ENCODE measurements at regions of chr11 and their contacts with region 1.

Region 1: GRCh38 chr11:74255741-74256369 is 55.6 kb downstream of the P4HA3 start:
- DNase-seq: peak; percentile 63
- ATAC-seq: peak; percentile 50; the same call in 1 of the 2 replicates
- H3K4me3 ChIP-seq: no peak overlapping the region
- H3K27ac ChIP-seq: no peak overlapping the region
- H3K4me1 ChIP-seq: peaks cover 10% of the 10 kb centered on the region
- H3K27me3 ChIP-seq: no peaks in the 10 kb centered on the region
- CTCF ChIP-seq: peak; percentile 93
- POLR2A ChIP-seq: peak; percentile 60
- RAD21 ChIP-seq: peak; percentile 96

Region 2: DNA sequence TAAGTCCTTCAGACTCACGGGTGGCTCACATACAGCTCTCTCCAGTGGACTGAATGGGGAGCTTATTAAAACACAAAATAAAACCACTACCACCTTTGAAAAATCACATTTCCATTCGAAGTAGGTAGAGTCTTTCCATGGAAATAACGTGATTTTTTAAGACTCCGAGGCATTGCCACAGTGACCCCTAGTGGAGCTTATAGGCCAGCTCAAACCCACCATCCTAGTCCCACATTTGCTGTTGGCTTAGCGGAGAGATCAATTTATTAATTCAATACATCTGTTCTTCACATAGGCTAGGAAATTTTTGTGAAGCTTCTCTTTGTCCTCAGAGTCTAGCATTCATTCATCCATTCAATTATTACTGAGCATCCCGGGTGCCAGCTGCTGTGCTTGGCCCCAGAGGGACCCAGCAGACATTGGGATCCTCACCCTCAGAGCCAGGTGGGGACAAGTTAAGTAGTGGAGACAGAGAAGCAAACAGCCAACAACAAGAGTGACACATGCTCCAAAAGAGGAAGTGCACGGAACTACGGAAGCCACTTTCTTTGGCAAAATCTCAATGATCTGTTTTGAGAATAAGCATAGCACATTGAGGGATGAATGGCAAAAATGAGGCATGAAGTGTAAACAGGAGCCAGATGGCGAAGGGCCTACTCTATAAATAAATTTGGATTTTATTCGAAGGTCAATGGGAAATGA is 65.8 kb after region 1 on chr11:
- CTCF ChIA-PET with region 1: no interaction called
- POLR2A ChIA-PET with region 1: no interaction called
- dilution Hi-C with region 1: no loop called
- in situ Hi-C with region 1: loop called (anchors 10 kb)
- intact Hi-C with region 1: loop called (anchors 1 kb)
- DNase-seq: peak; percentile 65
- ATAC-seq: no peak
- H3K4me3 ChIP-seq: no peak overlapping the region
- H3K27ac ChIP-seq: no peak overlapping the region
- H3K4me1 ChIP-seq: peaks cover 22% of the 10 kb centered on the region
- H3K27me3 ChIP-seq: no peaks in the 10 kb centered on the region
- CTCF ChIP-seq: peak; percentile 55
- POLR2A ChIP-seq: no peak
- RAD21 ChIP-seq: peak; percentile 60

Region 3: DNA sequence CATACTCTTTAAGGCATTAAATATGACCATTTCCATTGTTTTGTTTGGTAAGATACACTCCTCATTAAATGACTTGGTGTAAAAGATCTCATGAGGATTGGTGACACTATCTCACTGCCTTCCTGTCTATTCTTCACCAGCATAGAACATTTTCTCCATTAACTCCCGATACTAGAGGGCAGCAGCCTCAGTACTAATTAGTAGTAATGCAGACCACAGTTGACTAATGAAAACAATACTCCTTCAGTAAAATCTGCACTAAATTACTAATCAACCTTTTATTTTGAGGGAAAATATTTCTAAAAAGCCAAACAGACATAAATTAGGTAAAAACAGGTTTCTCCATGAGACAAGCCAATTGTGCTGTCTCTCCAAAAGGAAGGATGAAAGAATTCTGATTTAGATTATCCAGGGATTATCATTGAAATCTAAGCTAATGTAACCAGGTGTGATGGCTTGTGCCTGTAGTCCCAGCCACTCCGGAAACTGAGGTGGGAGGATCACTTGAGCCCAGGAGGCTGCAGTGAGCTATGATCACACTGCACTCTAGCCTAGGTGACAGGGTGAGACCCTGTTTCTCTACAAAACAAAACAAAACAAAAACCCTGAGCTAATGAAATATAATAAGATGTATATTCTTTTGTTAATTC is 132.9 kb after region 1 on chr11:
- CTCF ChIA-PET with region 1: no interaction called
- POLR2A ChIA-PET with region 1: no interaction called
- dilution Hi-C with region 1: no loop called
- in situ Hi-C with region 1: no loop called
- intact Hi-C with region 1: loop called (anchors 2 kb)
- DNase-seq: peak; percentile 55
- ATAC-seq: peak; percentile 74
- H3K4me3 ChIP-seq: no peak overlapping the region
- H3K27ac ChIP-seq: no peak overlapping the region
- H3K4me1 ChIP-seq: peaks cover 2% of the 10 kb centered on the region; the same call in 1 of the 2 replicates
- H3K27me3 ChIP-seq: no peaks in the 10 kb centered on the region
- CTCF ChIP-seq: peak; percentile 73
- POLR2A ChIP-seq: no peak
- RAD21 ChIP-seq: peak; percentile 70

Region 4: DNA sequence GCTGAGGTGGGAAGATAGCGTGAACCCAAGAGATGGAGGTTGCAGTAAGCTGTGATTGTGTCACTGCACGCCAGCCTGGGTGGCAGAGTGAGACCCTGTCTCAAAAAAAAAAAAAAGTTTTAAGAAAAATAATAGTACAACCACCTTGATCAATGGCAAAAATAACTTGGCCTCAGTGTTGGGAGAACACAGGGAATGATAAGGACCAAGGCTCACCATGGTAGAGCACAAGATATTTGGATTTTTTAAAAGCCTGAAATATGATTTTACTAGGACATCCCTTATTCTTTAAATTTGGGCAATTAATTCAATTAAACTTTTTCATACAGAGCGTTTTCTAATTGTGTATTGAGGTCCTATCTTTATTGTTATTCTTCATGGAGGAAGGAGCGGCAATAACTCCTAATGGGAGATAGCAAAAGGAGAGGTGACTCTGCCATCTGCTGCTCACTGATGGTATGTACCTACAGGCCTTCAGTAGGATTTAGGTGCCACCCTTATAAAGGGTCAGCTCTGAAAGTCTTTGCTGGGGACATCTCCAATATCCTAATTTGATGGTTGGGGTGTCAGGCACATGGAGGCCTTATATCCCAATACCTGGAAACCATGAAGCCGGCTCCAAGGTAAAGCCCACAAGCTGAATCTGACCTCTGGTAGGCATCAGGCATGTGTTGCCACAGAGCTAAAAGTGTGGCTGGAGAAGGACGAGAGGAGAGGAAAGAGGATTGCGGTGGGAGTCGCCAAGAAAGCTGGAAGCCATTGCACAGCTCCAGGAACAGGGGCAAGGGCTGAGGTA is 314.6 kb after region 1 on chr11:
- CTCF ChIA-PET with region 1: no interaction called
- POLR2A ChIA-PET with region 1: no interaction called
- dilution Hi-C with region 1: no loop called
- in situ Hi-C with region 1: loop called (anchors 5 kb)
- intact Hi-C with region 1: loop called (anchors 5 kb)
- DNase-seq: peak; percentile 53
- ATAC-seq: peak; percentile 89
- H3K4me3 ChIP-seq: no peak overlapping the region
- H3K27ac ChIP-seq: no peak overlapping the region
- H3K4me1 ChIP-seq: no peaks in the 10 kb centered on the region
- H3K27me3 ChIP-seq: peaks cover 16% of the 10 kb centered on the region
- CTCF ChIP-seq: peak; percentile 69
- POLR2A ChIP-seq: 0 out of 2 replicates have a peak, but pooled peaks have one; percentile 29
- RAD21 ChIP-seq: peak; percentile 86

Region 5: DNA sequence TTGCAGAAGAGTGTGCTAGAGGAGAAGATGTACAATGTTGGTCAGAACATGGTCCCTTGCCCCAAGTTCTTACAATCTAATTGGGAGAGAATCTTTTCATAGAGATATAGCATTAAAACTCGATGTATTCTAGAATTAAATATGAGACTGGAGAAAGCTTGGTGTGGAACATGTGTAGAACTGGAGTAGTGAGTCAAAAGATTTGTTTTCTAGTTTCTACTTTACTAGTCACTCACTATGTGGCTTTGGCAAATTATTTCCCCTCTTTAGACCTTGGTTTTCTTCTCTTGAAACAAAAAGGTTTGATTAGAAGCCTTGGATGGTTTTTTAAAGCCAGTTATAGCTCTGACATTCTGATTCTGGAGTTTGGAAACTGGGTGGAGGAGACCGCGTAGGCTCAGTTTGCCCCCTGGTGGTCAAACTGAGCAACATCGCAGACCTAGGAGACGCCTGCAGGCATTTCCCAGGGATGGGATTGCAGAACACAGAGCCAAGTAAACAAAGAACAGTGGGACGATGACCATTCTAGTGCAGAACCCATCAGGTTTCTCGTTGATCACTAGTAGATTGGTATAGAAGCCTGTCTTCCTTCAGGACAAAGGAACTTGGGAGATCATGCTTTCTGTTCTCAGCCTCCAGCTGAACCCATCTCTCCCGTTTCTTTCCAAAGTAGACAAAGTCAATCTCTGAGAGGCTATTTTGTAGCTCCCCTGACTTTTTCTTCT is 483.9 kb after region 1 on chr11:
- CTCF ChIA-PET with region 1: no interaction called
- POLR2A ChIA-PET with region 1: no interaction called
- dilution Hi-C with region 1: no loop called
- in situ Hi-C with region 1: loop called (anchors 10 kb)
- intact Hi-C with region 1: loop called (anchors 5 kb)
- DNase-seq: peak; percentile 73
- ATAC-seq: peak; percentile 93
- H3K4me3 ChIP-seq: no peak overlapping the region
- H3K27ac ChIP-seq: no peak overlapping the region
- H3K4me1 ChIP-seq: peaks cover 8% of the 10 kb centered on the region
- H3K27me3 ChIP-seq: peaks cover 4% of the 10 kb centered on the region; the same call in 1 of the 2 replicates
- CTCF ChIP-seq: peak; percentile 91
- POLR2A ChIP-seq: no peak
- RAD21 ChIP-seq: peak; percentile 90